ENCODE measurements at regions of chr14 and their contacts with region 1.

Region 1: GRCh38 chr14:90697577-90698206 is 118.5 kb downstream of the TTC7B start:
- DNase-seq: peak; percentile 85
- H3K4me3 Mint-ChIP-seq: no peak overlapping the region
- H3K27ac Mint-ChIP-seq: no peak overlapping the region
- H3K4me1 Mint-ChIP-seq: no peaks in the 10 kb centered on the region
- H3K27me3 Mint-ChIP-seq: no peaks in the 10 kb centered on the region
- CTCF ChIP-seq: peak; percentile 94

Region 2: DNA sequence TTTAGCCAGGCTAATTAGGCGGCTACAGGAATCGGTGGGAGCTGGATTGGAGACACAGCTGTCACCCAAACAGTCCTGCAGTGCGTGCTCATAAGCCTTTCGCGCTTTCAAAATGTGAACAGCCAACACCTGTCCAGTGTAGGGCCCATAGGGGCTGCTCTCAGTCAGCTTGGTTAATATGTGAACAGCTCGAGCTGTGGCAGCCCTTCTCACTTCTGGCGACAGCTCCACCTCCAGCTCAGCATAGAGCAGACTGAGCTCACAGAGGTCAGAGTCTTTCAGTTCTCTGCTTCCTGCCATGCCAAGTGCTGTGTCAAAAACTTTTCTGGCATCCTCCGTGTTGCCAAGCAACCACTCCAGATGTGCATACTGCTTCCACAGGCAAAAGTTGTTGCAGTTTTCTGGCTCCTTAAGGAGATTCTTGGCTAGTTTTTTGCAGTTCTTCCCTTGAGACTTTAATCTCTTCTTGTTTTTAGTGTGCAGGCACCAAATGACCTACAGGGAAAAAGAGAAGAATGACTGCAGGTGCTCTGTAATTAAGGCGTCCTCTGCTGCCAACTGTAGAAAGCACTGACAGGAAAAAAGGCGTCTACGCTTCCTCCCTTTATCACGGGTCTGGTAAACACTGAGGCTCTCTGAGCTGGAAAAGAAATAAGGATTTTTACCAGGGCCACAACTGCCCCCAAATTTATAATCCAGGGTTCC is 408.9 kb before region 1 on chr14:
- CTCF ChIA-PET with region 1: interaction called, 23 read pairs
- POLR2A ChIA-PET with region 1: no interaction called
- intact Hi-C with region 1: no loop called
- DNase-seq: no peak
- H3K4me3 Mint-ChIP-seq: no peak overlapping the region
- H3K27ac Mint-ChIP-seq: no peak overlapping the region
- H3K4me1 Mint-ChIP-seq: no peaks in the 10 kb centered on the region
- H3K27me3 Mint-ChIP-seq: no peaks in the 10 kb centered on the region
- CTCF ChIP-seq: no peak

Region 3: GRCh38 chr14:90368946-90369721 is 328.6 kb before region 1 on chr14:
- CTCF ChIA-PET with region 1: interaction called, 5 read pairs
- POLR2A ChIA-PET with region 1: interaction called, 3 read pairs
- intact Hi-C with region 1: loop called (anchors 1 kb)
- DNase-seq: peak; percentile 21
- H3K4me3 Mint-ChIP-seq: no peak overlapping the region
- H3K27ac Mint-ChIP-seq: no peak overlapping the region
- H3K4me1 Mint-ChIP-seq: no peaks in the 10 kb centered on the region
- H3K27me3 Mint-ChIP-seq: no peaks in the 10 kb centered on the region
- CTCF ChIP-seq: peak; percentile 12

Region 4: GRCh38 chr14:90681439-90681838 is 16.3 kb before region 1 on chr14:
- CTCF ChIA-PET with region 1: interaction called, 20 read pairs
- POLR2A ChIA-PET with region 1: no interaction called
- intact Hi-C with region 1: no loop called
- DNase-seq: no peak
- H3K4me3 Mint-ChIP-seq: no peak overlapping the region
- H3K27ac Mint-ChIP-seq: no peak overlapping the region
- H3K4me1 Mint-ChIP-seq: peaks cover 8% of the 10 kb centered on the region
- H3K27me3 Mint-ChIP-seq: no peaks in the 10 kb centered on the region
- CTCF ChIP-seq: no peak

Region 5: DNA sequence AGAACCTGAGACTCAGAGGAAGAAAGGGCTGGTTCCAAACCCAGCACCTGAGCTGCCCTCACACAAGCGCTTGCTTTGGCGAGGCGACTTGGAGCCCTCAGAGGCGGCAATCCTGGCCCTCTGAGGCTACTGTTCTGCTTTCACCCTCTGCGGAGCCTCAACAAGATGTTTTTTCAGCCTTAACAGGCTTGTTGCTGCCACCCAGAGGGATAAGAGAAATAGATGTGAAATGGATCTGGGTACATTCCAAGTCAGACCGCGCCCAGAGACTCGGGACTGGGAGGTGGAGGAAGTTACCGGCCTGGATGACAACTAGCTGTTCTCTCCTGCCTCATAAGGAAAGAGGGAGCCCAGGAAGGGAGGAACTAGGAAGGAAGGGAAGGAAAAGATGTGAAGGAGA is 29.0 kb after region 1 on chr14:
- CTCF ChIA-PET with region 1: interaction called, 11 read pairs
- POLR2A ChIA-PET with region 1: interaction called, 3 read pairs
- intact Hi-C with region 1: no loop called
- DNase-seq: peak; percentile 47
- H3K4me3 Mint-ChIP-seq: no peak overlapping the region
- H3K27ac Mint-ChIP-seq: no peak overlapping the region
- H3K4me1 Mint-ChIP-seq: peaks cover 5% of the 10 kb centered on the region
- H3K27me3 Mint-ChIP-seq: no peaks in the 10 kb centered on the region
- CTCF ChIP-seq: peak; percentile 8

Region 6: GRCh38 chr14:90903101-90903500 is 205.4 kb after region 1 on chr14:
- CTCF ChIA-PET with region 1: interaction called, 4 read pairs
- POLR2A ChIA-PET with region 1: no interaction called
- intact Hi-C with region 1: loop called (anchors 5 kb)
- DNase-seq: peak; percentile 71
- H3K4me3 Mint-ChIP-seq: no peak overlapping the region
- H3K27ac Mint-ChIP-seq: no peak overlapping the region
- H3K4me1 Mint-ChIP-seq: no peaks in the 10 kb centered on the region
- H3K27me3 Mint-ChIP-seq: no peaks in the 10 kb centered on the region
- CTCF ChIP-seq: peak; percentile 81

Measured in MCF 10A (cell line).